B cell (primary cell): ENCODE measurements at regions of chr1 and their contacts with region 1.

Region 1: GRCh38 chr1:156456622-156457465 is 43.7 kb downstream of the MEF2D start:
- DNase-seq: peak; percentile 98
- ATAC-seq: peak; percentile 85
- H3K4me3 ChIP-seq: peak overlapping the region; percentile 41 to 87 (median 84)
- H3K4me3 Mint-ChIP-seq: peak overlapping the region; percentile 96
- H3K27ac ChIP-seq: peak overlapping the region; percentile 97 to 100
- H3K27ac Mint-ChIP-seq: peak overlapping the region; percentile 98
- H3K4me1 ChIP-seq: peaks cover 3 to 15% of the 10 kb centered on the region in 2 donors
- H3K4me1 Mint-ChIP-seq: peaks cover 17% of the 10 kb centered on the region
- H3K27me3 ChIP-seq: no peaks in the 10 kb centered on the region
- H3K27me3 Mint-ChIP-seq: no peaks in the 10 kb centered on the region
- CTCF ChIP-seq: no peak

Region 2: GRCh38 chr1:156295391-156295947 is 161.4 kb before region 1 on chr1 and contains the start of gene GLMP:
- CTCF ChIA-PET with region 1: no interaction called
- POLR2A ChIA-PET with region 1: no interaction called
- intact Hi-C with region 1: no loop called
- DNase-seq: peak; percentile 70
- ATAC-seq: peak; percentile 60
- H3K4me3 ChIP-seq: peak within 1 kb of the TSS; percentile 54 to 78 (median 70)
- H3K4me3 Mint-ChIP-seq: peak within 1 kb of the TSS; percentile 92
- H3K27ac ChIP-seq: peak within 1 kb of the TSS in 1 of 2 donors; percentile 58
- H3K27ac Mint-ChIP-seq: peak within 1 kb of the TSS; percentile 80
- H3K4me1 ChIP-seq: peaks cover 12 to 20% of the 10 kb centered on the region in 2 donors
- H3K4me1 Mint-ChIP-seq: peaks cover 20% of the 10 kb centered on the region
- H3K27me3 ChIP-seq: peaks cover 0 to 2% (median 0%) of the 10 kb centered on the region in 4 experiments
- H3K27me3 Mint-ChIP-seq: no peaks in the 10 kb centered on the region
- CTCF ChIP-seq: no peak
- total RNA-seq, gene GLMP: 21.2 and 21.3 TPM in 2 replicates

Region 3: GRCh38 chr1:156571949-156572662 is 115.3 kb after region 1 on chr1 and contains the start of gene IQGAP3:
- CTCF ChIA-PET with region 1: interaction called, 4 read pairs
- POLR2A ChIA-PET with region 1: interaction called, 3 read pairs
- intact Hi-C with region 1: loop called (anchors 2 kb)
- DNase-seq: peak; percentile 88
- ATAC-seq: peak; percentile 96
- H3K4me3 ChIP-seq: peak within 1 kb of the TSS; percentile 6 to 45 (median 27)
- H3K4me3 Mint-ChIP-seq: peak within 1 kb of the TSS; percentile 85
- H3K27ac ChIP-seq: no peak within 1 kb of the TSS
- H3K27ac Mint-ChIP-seq: peak within 1 kb of the TSS; percentile 12
- H3K4me1 ChIP-seq: peaks cover 13 to 14% of the 10 kb centered on the region in 2 donors
- H3K4me1 Mint-ChIP-seq: peaks cover 13% of the 10 kb centered on the region
- H3K27me3 ChIP-seq: peaks cover 0 to 32% (median 14%) of the 10 kb centered on the region in 4 experiments
- H3K27me3 Mint-ChIP-seq: peaks cover 23% of the 10 kb centered on the region
- CTCF ChIP-seq: no peak
- total RNA-seq, gene IQGAP3: 0.07 TPM in 2 replicates

Region 4: DNA sequence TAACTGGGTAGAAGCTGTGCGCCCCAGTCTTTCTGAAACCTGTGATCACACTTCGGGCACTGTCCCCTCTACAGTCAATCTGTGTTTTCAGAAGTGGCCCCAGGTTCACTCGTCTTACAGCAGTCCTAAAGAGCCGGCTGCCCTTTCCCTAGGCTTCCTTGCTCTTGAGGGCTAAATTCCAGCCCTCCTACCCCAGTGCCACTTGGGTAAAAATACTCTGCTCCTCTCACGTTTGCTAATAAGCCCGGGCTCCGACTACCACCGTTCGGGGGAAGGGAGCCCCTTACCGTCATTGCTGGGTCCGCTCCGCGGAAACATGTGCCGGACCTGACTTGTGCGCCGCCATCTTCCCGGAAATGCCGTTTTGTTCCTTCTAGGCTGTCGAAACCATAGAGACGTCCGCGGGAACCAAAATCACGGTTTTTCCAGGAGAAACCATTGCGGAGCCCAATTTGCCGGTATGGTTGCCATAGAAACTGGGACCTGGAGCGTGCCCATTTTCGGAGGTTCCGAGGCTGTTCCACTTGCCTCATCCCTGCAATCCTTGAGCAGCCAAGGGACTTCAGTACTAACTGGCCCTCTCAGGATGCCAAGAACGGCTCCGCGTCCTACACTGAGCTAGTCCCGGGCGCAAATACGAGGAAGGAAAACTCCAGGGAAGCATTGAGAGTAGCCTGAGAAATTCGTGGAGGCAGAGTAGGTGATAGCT is 144.4 kb after region 1 on chr1 and contains the start of gene GPATCH4:
- CTCF ChIA-PET with region 1: interaction called, 11 read pairs
- POLR2A ChIA-PET with region 1: interaction called, 4 read pairs
- intact Hi-C with region 1: loop called (anchors 2 kb)
- DNase-seq: peak; percentile 84
- ATAC-seq: peak; percentile 74
- H3K4me3 ChIP-seq: peak within 1 kb of the TSS; percentile 85 to 100 (median 99)
- H3K4me3 Mint-ChIP-seq: peak within 1 kb of the TSS; percentile 97
- H3K27ac ChIP-seq: peak within 1 kb of the TSS; percentile 72 to 83
- H3K27ac Mint-ChIP-seq: peak within 1 kb of the TSS; percentile 96
- H3K4me1 ChIP-seq: peaks cover 22 to 30% of the 10 kb centered on the region in 2 donors
- H3K4me1 Mint-ChIP-seq: peaks cover 38% of the 10 kb centered on the region
- H3K27me3 ChIP-seq: no peaks in the 10 kb centered on the region
- H3K27me3 Mint-ChIP-seq: no peaks in the 10 kb centered on the region
- CTCF ChIP-seq: no peak
- total RNA-seq, gene GPATCH4: 31.4 and 38.3 TPM in 2 replicates